Tibial artery (tissue), 4 donors: ENCODE measurements at regions of chr18 and their contacts with region 1.

Region 1: DNA sequence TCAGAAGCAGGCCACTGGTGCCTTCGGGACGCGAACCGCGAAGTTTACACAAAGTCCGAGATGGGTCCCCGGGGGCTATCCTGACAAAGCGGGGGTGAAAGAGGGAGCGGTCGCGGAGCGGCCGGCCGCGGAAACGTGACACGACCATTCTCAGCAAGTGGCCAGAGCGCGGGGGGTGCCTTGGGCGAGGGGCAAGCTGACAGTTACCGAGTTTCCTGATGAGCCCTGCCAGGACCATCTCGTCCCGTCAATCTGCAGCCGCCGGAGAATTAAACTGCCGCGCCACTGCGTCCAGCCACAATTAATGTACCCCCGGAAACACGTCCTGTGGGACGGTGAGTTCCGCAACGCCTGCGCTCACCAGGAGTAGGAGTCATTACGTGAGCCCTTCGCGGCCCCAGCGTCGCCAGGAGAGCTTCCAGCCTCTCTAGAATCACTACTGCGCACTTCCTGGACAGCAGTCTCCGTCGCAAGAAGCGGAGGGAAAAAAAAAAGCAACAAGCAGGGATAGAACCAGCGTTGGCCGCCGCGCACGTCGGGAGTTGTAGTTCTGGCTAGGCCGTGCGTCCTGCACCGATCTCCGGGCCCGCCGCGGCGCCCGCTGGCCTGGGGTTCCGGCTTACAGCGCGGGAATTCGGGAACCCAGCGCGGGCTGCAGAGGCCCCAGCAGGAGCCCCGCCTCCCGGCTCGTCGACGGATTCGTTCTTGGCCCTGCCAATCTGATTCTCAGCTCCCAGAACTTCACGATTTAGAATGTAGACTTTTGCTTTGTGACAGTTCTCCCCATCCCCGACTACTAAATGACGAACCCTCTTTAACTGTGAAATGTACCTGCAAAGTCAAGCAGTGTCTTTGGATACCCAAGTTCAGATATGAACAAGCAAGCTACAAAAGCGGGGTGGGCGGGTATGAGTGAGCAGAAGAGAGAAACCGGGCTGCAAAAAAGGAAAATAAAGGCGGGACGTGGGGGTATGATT is at the start of gene RTTN:
- DNase-seq: peak; percentile 91 to 96
- H3K4me3 ChIP-seq: peak within 1 kb of the TSS; percentile 71 to 80
- H3K27ac ChIP-seq: peak within 1 kb of the TSS; percentile 91 to 93
- H3K4me1 ChIP-seq: peaks cover 0 to 17% (median 5%) of the 10 kb centered on the region in 4 donors
- H3K27me3 ChIP-seq: no peaks in the 10 kb centered on the region
- CTCF ChIP-seq: no peak

Region 2: DNA sequence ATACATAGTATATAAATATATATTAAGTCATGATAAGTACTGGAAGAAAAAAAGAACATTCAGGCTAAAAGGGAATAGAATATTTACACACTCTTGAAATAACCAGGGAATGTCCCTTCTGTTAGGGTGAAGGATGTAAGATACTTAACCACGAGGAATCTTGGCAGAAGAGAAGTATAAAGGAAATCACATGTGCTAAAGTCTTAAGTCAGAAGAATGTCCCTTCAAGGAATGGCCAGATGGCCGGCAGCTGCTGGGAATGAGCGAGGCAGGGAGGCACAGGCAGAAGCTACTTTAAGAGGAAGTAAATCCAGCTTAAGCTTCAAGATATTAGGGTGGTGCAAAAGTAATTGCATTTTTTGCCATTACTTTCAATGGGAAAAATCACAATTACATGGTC is 1402.4 kb before region 1 on chr18:
- intact Hi-C with region 1: no loop called
- DNase-seq: peak; percentile 77 to 78
- H3K4me3 ChIP-seq: no peak overlapping the region
- H3K27ac ChIP-seq: no peak overlapping the region
- H3K4me1 ChIP-seq: peaks cover 0 to 5% (median under 1%) of the 10 kb centered on the region in 4 donors
- H3K27me3 ChIP-seq: no peaks in the 10 kb centered on the region
- CTCF ChIP-seq: no peak

Region 3: GRCh38 chr18:69747388-69747787 is 458.3 kb before region 1 on chr18:
- intact Hi-C with region 1: no loop called
- DNase-seq: no peak
- H3K4me3 ChIP-seq: no peak overlapping the region
- H3K27ac ChIP-seq: no peak overlapping the region
- H3K4me1 ChIP-seq: no peaks in the 10 kb centered on the region
- H3K27me3 ChIP-seq: no peaks in the 10 kb centered on the region
- CTCF ChIP-seq: no peak

Region 4: GRCh38 chr18:69817335-69817940 is 388.3 kb before region 1 on chr18:
- intact Hi-C with region 1: no loop called
- DNase-seq: no peak
- H3K4me3 ChIP-seq: no peak overlapping the region
- H3K27ac ChIP-seq: no peak overlapping the region
- H3K4me1 ChIP-seq: no peaks in the 10 kb centered on the region
- H3K27me3 ChIP-seq: no peaks in the 10 kb centered on the region
- CTCF ChIP-seq: no peak

Region 5: GRCh38 chr18:70288851-70289328 is 83.2 kb after region 1 on chr18 and contains the start of gene SOCS6:
- intact Hi-C with region 1: loop called (anchors 5 kb)
- DNase-seq: peak; percentile 41 to 73
- H3K4me3 ChIP-seq: peak within 1 kb of the TSS; percentile 71 to 86
- H3K27ac ChIP-seq: peak within 1 kb of the TSS; percentile 84 to 92
- H3K4me1 ChIP-seq: peaks cover 0 to 38% (median 16%) of the 10 kb centered on the region in 4 donors
- H3K27me3 ChIP-seq: no peaks in the 10 kb centered on the region
- CTCF ChIP-seq: no peak

Region 6: GRCh38 chr18:70432804-70433400 is 227.2 kb after region 1 on chr18:
- intact Hi-C with region 1: loop called (anchors 1 kb)
- DNase-seq: no peak
- H3K4me3 ChIP-seq: no peak overlapping the region
- H3K27ac ChIP-seq: no peak overlapping the region
- H3K4me1 ChIP-seq: no peaks in the 10 kb centered on the region
- H3K27me3 ChIP-seq: no peaks in the 10 kb centered on the region
- CTCF ChIP-seq: no peak